SK-N-SH (cell line): ENCODE measurements at regions of chr14 and their contacts with region 1.

Region 1: GRCh38 chr14:49306152-49306751 is 279.9 kb downstream of the RPS29 start:
- DNase-seq: peak; percentile 16
- H3K4me3 ChIP-seq: no peak overlapping the region; a peak in 1 of 4 replicates
- H3K27ac ChIP-seq: no peak overlapping the region
- H3K4me1 ChIP-seq: peaks cover 0 to 2% of the 10 kb centered on the region in 2 experiments; a peak in 1 of 4 replicates
- H3K27me3 ChIP-seq: no peaks in the 10 kb centered on the region
- CTCF ChIP-seq: peak; percentile 61
- EP300 ChIP-seq: no peak
- RAD21 ChIP-seq: peak; percentile 65

Region 2: GRCh38 chr14:47917345-47917954 is 1388.8 kb before region 1 on chr14:
- CTCF ChIA-PET with region 1: interaction called, 11 read pairs
- POLR2A ChIA-PET with region 1: no interaction called
- DNase-seq: no peak
- H3K4me3 ChIP-seq: no peak overlapping the region; a peak in 1 of 4 replicates
- H3K27ac ChIP-seq: no peak overlapping the region
- H3K4me1 ChIP-seq: no peaks in the 10 kb centered on the region; a peak in 1 of 4 replicates
- H3K27me3 ChIP-seq: no peaks in the 10 kb centered on the region
- CTCF ChIP-seq: peak; percentile 60
- EP300 ChIP-seq: no peak
- RAD21 ChIP-seq: peak; percentile 70

Region 3: GRCh38 chr14:49189375-49189774 is 116.9 kb before region 1 on chr14:
- CTCF ChIA-PET with region 1: no interaction called
- POLR2A ChIA-PET with region 1: no interaction called
- DNase-seq: peak; percentile 4
- H3K4me3 ChIP-seq: no peak overlapping the region
- H3K27ac ChIP-seq: no peak overlapping the region
- H3K4me1 ChIP-seq: peaks cover 0 to 14% of the 10 kb centered on the region in 2 experiments; a peak in 1 of 4 replicates
- H3K27me3 ChIP-seq: no peaks in the 10 kb centered on the region
- CTCF ChIP-seq: no peak
- EP300 ChIP-seq: no peak
- RAD21 ChIP-seq: no peak

Region 4: DNA sequence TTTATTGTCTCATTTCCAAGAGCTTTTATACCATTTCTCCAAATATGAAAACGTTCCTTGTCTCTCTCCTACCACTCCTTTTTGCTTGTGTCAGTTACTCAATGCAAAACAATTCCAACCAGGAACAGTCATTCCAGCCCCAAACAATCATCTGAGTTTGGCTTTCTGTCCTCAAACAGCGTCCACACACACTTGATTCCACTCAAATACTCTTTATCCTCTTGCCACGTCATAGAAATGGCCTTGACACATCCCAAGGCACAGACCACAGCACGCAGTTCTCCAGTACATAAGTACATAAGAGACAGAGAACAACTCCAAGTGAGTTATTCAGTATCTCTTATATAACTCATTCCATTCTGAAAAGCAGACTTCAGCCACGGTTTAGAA is 19.3 kb before region 1 on chr14:
- CTCF ChIA-PET with region 1: interaction called, 13 read pairs
- POLR2A ChIA-PET with region 1: no interaction called
- DNase-seq: no peak
- H3K4me3 ChIP-seq: no peak overlapping the region
- H3K27ac ChIP-seq: no peak overlapping the region
- H3K4me1 ChIP-seq: no peaks in the 10 kb centered on the region
- H3K27me3 ChIP-seq: no peaks in the 10 kb centered on the region
- CTCF ChIP-seq: no peak
- EP300 ChIP-seq: no peak
- RAD21 ChIP-seq: no peak

Region 5: GRCh38 chr14:49294621-49295148 is 11.6 kb before region 1 on chr14:
- CTCF ChIA-PET with region 1: interaction called, 13 read pairs
- POLR2A ChIA-PET with region 1: no interaction called
- DNase-seq: no peak
- H3K4me3 ChIP-seq: no peak overlapping the region
- H3K27ac ChIP-seq: no peak overlapping the region
- H3K4me1 ChIP-seq: no peaks in the 10 kb centered on the region
- H3K27me3 ChIP-seq: no peaks in the 10 kb centered on the region
- CTCF ChIP-seq: no peak
- EP300 ChIP-seq: no peak
- RAD21 ChIP-seq: no peak

Region 6: GRCh38 chr14:49319810-49320209 is 13.6 kb after region 1 on chr14:
- CTCF ChIA-PET with region 1: interaction called, 14 read pairs
- POLR2A ChIA-PET with region 1: no interaction called
- DNase-seq: no peak
- H3K4me3 ChIP-seq: no peak overlapping the region
- H3K27ac ChIP-seq: no peak overlapping the region
- H3K4me1 ChIP-seq: no peaks in the 10 kb centered on the region; a peak in 1 of 4 replicates
- H3K27me3 ChIP-seq: no peaks in the 10 kb centered on the region
- CTCF ChIP-seq: no peak
- EP300 ChIP-seq: no peak
- RAD21 ChIP-seq: no peak

Region 7: GRCh38 chr14:49512147-49512551 is 205.9 kb after region 1 on chr14:
- CTCF ChIA-PET with region 1: no interaction called
- POLR2A ChIA-PET with region 1: no interaction called
- DNase-seq: no peak
- H3K4me3 ChIP-seq: no peak overlapping the region
- H3K27ac ChIP-seq: no peak overlapping the region
- H3K4me1 ChIP-seq: no peaks in the 10 kb centered on the region
- H3K27me3 ChIP-seq: no peaks in the 10 kb centered on the region
- CTCF ChIP-seq: no peak
- EP300 ChIP-seq: no peak
- RAD21 ChIP-seq: no peak